CD14-positive monocyte (primary cell): ENCODE measurements at regions of chr14 and their contacts with region 1.

Region 1: DNA sequence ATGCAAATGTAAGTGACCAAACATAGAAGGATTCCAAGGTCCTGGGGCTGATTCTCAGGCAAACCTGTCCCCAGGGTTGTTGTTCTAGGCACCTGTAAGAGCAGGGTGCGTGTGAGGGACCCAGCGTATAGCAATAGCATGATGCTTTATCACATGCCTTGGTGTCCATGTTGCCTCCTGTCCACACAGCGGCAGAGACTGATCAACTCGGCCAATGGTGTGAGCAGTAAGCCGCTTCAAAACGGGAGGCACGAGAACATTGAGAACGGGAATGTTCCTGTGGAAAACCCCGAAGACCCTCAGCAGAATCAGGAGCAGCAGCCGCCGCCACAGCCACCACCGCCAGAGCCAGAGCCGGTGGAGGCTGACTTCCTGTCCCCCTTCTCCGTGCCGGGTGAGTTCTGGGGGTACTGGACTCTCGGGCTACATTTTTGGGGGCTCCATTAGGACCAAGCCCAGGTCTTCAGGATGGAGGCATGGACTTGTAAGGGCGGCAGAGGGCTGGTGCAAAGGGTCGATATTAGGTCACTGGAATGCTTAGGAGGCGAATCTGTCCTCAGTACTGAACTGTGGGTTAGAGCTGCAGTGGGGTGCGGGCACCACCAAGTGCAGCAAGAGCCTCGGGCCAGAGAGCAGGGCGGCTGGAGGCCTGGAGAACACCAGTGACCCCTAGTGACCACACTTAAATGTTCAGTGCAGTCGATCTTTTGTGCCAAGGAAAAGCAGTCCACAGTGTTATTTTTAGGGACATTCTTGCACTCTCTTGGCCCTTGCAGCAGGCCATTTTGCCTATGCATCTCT is 57.2 kb upstream of the RIN3 start:
- DNase-seq: peak; percentile 79 to 85 (median 83)
- H3K4me3 ChIP-seq: no peak overlapping the region
- H3K4me3 Mint-ChIP-seq: peak overlapping the region in 1 of 2 donors; percentile 47
- H3K27ac ChIP-seq: peak overlapping the region in 1 of 2 donors; percentile 52
- H3K27ac Mint-ChIP-seq: peak overlapping the region in 6 of 7 donors; percentile 75 to 91 (median 83)
- H3K4me1 ChIP-seq: peaks cover 40 to 52% of the 10 kb centered on the region in 2 donors
- H3K4me1 Mint-ChIP-seq: peaks cover 54% of the 10 kb centered on the region
- H3K27me3 ChIP-seq: no peaks in the 10 kb centered on the region
- H3K27me3 Mint-ChIP-seq: peaks cover 0 to 2% (median 0%) of the 10 kb centered on the region in 3 donors
- CTCF ChIP-seq: peak; percentile 87

Region 2: DNA sequence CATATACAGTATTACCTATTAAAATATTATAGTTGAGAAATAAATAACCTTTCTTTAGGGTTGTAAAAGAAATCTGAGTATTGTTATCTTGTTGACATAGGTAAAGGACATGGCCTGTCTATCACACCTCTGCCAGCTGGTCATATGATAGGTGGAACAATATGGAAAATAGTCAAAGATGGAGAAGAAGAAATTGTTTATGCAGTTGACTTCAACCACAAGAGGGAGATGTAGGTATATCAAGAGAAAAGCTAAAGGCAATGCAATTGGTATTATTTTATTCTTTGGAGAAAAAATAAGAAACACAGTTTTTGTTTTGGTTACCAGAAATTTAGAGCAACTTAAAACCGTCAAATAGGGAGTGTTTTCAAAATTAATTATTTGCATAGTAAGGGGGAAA is 321.1 kb before region 1 on chr14:
- intact Hi-C with region 1: loop called (anchors 2 to 5 kb)
- DNase-seq: peak; percentile 7 to 46 (median 33)
- H3K4me3 ChIP-seq: no peak overlapping the region
- H3K4me3 Mint-ChIP-seq: no peak overlapping the region
- H3K27ac ChIP-seq: no peak overlapping the region
- H3K27ac Mint-ChIP-seq: no peak overlapping the region
- H3K4me1 ChIP-seq: no peaks in the 10 kb centered on the region
- H3K4me1 Mint-ChIP-seq: peaks cover 4% of the 10 kb centered on the region
- H3K27me3 ChIP-seq: no peaks in the 10 kb centered on the region
- H3K27me3 Mint-ChIP-seq: no peaks in the 10 kb centered on the region
- CTCF ChIP-seq: peak; percentile 72

Region 3: DNA sequence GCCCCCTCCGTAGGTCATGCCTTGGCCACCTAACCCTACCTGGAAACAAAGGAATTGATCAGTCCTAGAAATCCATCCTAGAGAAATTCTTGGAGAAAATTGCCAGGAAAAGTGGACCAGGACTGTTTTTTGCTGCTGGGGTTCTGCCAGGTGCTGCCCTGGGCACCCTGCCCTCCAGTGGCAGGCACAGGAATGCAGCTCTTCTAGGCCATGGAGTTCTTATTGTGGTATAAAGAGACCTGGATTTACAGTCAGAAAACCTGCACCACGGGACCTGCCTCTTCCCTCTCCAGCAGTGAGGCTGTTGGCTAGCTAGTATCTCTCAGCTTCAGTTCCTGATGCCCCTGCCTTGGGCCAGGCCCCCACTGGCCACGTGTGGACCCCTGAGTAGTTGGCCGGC is 73.7 kb before region 1 on chr14:
- intact Hi-C with region 1: loop called in 1 of 2 experiments (anchors 10 kb)
- DNase-seq: no peak
- H3K4me3 ChIP-seq: no peak overlapping the region
- H3K4me3 Mint-ChIP-seq: no peak overlapping the region
- H3K27ac ChIP-seq: peak overlapping the region; percentile 9 to 82
- H3K27ac Mint-ChIP-seq: peak overlapping the region; percentile 15 to 92 (median 41)
- H3K4me1 ChIP-seq: peaks cover 54 to 61% of the 10 kb centered on the region in 2 donors
- H3K4me1 Mint-ChIP-seq: peaks cover 60% of the 10 kb centered on the region
- H3K27me3 ChIP-seq: no peaks in the 10 kb centered on the region
- H3K27me3 Mint-ChIP-seq: peaks cover under 1 to 8% (median 3%) of the 10 kb centered on the region in 3 donors
- CTCF ChIP-seq: peak; percentile 68

Region 4: DNA sequence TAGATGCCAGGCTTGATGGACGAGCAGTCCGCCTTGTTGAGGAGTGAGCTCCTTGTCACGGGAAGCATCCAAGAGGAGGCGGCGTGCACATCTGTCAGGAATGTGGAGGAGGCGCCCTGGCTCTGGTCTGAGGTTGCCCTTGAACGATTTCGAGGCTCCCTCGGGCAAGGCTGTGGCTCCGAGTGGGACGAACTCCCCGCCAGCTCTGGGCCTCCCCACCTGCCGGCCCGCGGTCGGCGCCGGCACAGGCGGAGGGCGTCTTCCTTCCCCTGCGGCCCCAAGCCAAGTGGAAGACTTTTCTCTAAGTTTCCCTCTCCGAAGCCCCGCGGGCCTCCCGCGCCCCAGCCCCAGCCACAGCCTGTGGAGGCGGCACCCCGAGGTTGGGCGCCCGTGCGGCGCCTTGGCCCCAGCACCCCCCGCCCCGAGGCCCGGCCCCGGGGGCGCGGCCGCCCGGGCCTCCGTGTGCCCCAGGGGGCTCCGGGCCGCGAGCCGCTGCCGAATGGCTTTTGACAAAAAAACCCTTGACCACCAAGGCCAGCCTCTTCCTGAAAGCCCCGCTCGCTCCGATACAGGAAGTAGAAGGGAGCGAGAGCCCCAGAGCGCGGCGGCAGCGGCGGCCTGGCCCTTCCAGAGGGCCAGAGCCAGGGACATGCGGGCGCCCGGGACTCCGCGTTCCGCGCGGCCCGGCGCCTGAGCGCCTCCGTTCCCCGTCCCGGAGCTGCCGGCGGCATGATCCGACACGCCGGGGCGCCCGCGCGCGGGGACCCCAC is 57.0 kb after region 1 on chr14 and contains the start of gene RIN3:
- intact Hi-C with region 1: loop called in 1 of 2 experiments (anchors 10 kb)
- DNase-seq: peak; percentile 70 to 82 (median 77)
- H3K4me3 ChIP-seq: peak within 1 kb of the TSS; percentile 65 to 92 (median 91)
- H3K4me3 Mint-ChIP-seq: peak within 1 kb of the TSS; percentile 86 to 89
- H3K27ac ChIP-seq: peak within 1 kb of the TSS; percentile 55 to 95
- H3K27ac Mint-ChIP-seq: peak within 1 kb of the TSS; percentile 57 to 92 (median 90)
- H3K4me1 ChIP-seq: peaks cover 39 to 70% of the 10 kb centered on the region in 2 donors
- H3K4me1 Mint-ChIP-seq: peaks cover 64% of the 10 kb centered on the region
- H3K27me3 ChIP-seq: peaks cover 0 to 12% of the 10 kb centered on the region in 2 donors
- H3K27me3 Mint-ChIP-seq: peaks cover 12 to 31% (median 30%) of the 10 kb centered on the region in 3 donors
- CTCF ChIP-seq: no peak
- polyA plus RNA-seq, gene RIN3: 42.8 to 144 (median 54.6) TPM

Region 5: GRCh38 chr14:92531106-92531873 is 74.9 kb after region 1 on chr14:
- intact Hi-C with region 1: loop called in 1 of 2 experiments (anchors 5 kb)
- DNase-seq: peak; percentile 83 to 95 (median 85)
- H3K4me3 ChIP-seq: no peak overlapping the region
- H3K4me3 Mint-ChIP-seq: peak overlapping the region in 1 of 2 donors; percentile 64
- H3K27ac ChIP-seq: peak overlapping the region; percentile 33 to 89
- H3K27ac Mint-ChIP-seq: peak overlapping the region; percentile 78 to 98 (median 92)
- H3K4me1 ChIP-seq: peaks cover 21 to 36% of the 10 kb centered on the region in 2 donors
- H3K4me1 Mint-ChIP-seq: peaks cover 48% of the 10 kb centered on the region
- H3K27me3 ChIP-seq: no peaks in the 10 kb centered on the region
- H3K27me3 Mint-ChIP-seq: peaks cover 0 to 7% (median 1%) of the 10 kb centered on the region in 3 donors
- CTCF ChIP-seq: no peak

Region 6: DNA sequence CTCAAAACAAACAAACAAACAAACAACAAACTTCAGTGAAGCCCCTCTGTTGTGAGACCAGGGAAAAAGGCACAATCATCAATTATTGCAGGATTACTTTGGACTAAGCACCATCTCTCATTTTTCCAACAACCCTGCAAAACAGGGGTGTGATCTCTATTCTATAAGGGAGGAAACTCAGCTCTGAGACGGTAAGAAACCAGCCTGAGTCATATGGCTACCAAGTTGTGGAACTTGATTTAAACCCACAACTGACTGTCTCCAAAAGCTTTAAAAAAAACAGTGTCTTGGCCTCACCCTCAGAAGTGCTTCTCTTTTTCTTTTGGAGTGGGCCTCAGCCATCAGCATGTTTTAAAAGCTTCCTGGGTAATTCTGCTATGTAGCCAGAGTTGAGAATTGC is 106.9 kb after region 1 on chr14:
- intact Hi-C with region 1: no loop called
- DNase-seq: peak; percentile 59 to 73 (median 68)
- H3K4me3 ChIP-seq: no peak overlapping the region
- H3K4me3 Mint-ChIP-seq: no peak overlapping the region
- H3K27ac ChIP-seq: peak overlapping the region; percentile 34 to 71
- H3K27ac Mint-ChIP-seq: peak overlapping the region; percentile 58 to 90 (median 82)
- H3K4me1 ChIP-seq: peaks cover 31 to 38% of the 10 kb centered on the region in 2 donors
- H3K4me1 Mint-ChIP-seq: peaks cover 38% of the 10 kb centered on the region
- H3K27me3 ChIP-seq: no peaks in the 10 kb centered on the region
- H3K27me3 Mint-ChIP-seq: peaks cover 0 to 5% (median 0%) of the 10 kb centered on the region in 3 donors
- CTCF ChIP-seq: no peak

Region 7: DNA sequence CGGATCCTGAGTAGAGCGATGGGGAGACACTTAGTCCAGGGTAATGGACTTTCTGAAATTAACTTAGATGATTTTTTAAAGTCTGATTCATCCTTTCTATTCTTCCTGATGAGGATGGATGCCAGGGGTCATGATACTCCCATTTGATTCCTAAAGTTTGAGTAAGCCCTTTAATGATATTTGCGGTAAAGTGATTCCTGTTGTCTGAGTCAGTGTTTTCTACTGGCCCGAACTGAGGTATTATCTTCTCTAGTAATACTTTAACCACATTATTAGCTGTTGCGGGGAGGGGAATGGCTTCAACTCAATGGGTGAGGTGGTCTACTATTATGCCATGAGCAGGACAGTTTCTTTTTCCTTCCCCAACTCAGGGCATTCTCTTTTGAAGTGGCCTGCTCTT is 168.8 kb after region 1 on chr14:
- intact Hi-C with region 1: no loop called
- DNase-seq: no peak
- H3K4me3 ChIP-seq: no peak overlapping the region
- H3K4me3 Mint-ChIP-seq: no peak overlapping the region
- H3K27ac ChIP-seq: no peak overlapping the region
- H3K27ac Mint-ChIP-seq: no peak overlapping the region
- H3K4me1 ChIP-seq: peaks cover 7 to 13% of the 10 kb centered on the region in 2 donors
- H3K4me1 Mint-ChIP-seq: peaks cover 12% of the 10 kb centered on the region
- H3K27me3 ChIP-seq: no peaks in the 10 kb centered on the region
- H3K27me3 Mint-ChIP-seq: peaks cover 0 to 4% (median 2%) of the 10 kb centered on the region in 3 donors
- CTCF ChIP-seq: no peak